Activated CD4-positive, alpha-beta memory T cell treated with anti-CD3 and anti-CD28 coated beads, Interleukin-2, amount 10 ng/mL, durations not matched to agents 7 days and 5 days (primary cell): ENCODE measurements at regions of chr16 and their contacts with region 1.

Region 1: DNA sequence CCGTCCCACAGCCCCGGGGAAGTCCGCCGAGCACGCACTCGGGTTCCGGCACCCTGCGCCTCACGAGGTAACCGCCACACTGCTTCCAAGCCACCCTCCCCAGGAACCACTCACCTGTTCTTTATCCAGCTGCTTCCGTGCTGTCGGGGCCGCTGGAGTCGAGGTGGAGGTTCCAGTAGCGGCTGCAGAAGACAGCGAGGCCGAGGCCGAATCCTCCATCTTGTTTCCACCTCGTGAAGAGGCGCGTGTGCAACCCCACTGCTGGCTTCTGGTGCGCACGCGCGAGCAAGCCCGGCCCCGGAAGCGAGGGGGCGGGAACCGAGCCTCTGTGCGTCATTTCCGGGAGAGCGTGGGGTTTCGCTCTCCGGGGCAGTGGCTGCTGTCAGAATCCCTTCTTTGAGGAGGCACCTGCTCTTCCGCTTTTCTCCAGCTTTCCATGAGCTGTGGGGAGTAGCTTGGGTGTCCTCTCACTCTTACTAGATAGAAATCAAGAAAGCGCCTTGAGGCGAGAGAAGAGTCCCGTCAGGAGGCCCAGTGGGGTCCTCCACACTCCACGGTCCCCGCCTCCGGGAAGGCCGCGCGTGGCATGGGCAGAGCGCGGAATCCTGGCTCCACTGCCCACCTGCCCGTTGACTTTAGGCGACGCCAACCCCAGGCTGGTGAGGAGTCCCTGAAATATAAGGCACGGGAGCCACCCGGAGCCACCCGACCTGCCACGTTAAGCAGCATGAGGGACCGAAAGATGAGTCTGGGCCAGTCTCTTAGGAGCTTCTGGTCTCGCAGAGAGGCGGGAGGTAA is at the start of gene RSL1D1:
- DNase-seq: peak; percentile 94
- H3K4me3 Mint-ChIP-seq: peak within 1 kb of the TSS; percentile 97
- H3K27ac Mint-ChIP-seq: peak within 1 kb of the TSS; percentile 90
- H3K4me1 Mint-ChIP-seq: peaks cover 61% of the 10 kb centered on the region
- H3K27me3 Mint-ChIP-seq: no peaks in the 10 kb centered on the region
- total RNA-seq, gene RSL1D1: 146 to 157 TPM

Region 2: DNA sequence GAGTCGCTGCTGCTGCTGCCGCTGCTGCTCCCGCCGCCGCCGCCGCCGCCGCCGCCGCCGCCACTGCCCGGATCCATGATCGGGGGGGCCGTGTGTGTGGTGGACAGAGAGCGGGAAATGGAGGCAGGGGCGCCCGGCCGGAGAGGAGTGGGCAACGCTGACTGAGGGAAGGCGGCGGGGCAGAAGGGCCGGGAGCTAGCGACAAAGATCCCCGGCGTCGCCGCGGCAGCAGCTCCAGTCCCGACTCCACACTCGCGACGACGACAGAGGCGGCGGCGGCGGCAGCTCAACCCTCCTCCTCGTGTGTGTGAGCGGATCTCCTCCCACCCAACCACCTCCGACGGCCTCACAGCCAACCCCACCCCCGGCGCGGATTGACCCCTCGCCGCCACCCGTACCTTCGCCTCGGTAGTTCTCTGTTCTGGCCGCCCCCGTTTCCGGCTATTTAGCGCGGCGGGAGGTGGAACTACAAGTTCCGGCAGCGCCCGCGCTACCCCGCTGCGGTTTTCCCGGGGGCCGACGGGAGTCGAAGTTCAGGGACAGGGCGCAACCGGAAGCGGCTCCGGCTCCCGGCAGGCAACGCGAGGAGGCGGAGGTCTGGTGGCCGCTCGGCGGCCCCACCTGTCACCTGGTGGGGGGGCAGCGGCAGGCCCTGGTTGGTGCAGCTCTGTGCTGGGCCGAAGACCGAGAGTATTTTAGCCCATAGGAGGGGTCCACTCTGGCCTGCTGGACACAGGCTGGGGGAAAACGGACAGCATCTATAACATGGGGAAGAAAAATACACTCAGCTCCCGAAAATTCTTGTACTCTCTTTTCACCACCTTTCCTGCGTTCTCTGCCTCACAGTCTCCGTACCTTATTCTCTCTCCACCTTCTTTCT is 64.4 kb after region 1 on chr16 and contains the start of gene GSPT1:
- CTCF ChIA-PET with region 1: no interaction called
- POLR2A ChIA-PET with region 1: interaction called, 23 read pairs
- DNase-seq: peak; percentile 100
- H3K4me3 Mint-ChIP-seq: peak within 1 kb of the TSS; percentile 88
- H3K27ac Mint-ChIP-seq: peak within 1 kb of the TSS; percentile 93
- H3K4me1 Mint-ChIP-seq: peaks cover 34% of the 10 kb centered on the region
- H3K27me3 Mint-ChIP-seq: peaks cover 13% of the 10 kb centered on the region
- total RNA-seq, gene GSPT1: 124 to 125 TPM

Region 3: DNA sequence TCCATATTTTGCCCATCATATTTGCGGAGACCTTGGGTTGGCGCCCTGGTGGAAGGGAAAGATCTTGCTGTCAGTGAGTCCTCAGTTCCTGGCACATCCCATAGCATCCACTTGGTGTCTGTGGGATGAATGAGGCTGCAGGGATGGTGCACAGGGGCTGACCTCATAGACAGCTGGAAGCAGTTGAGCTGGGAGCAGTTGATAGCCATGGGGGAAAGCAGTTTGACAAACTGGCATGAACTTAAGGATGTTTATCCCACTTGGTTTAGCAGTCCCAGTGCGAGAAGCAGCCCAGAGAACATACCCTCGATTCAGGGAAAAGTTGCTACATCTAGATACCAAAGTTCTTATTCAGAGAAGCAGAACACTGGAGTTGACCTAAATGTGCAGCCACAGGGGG is 205.8 kb after region 1 on chr16:
- CTCF ChIA-PET with region 1: no interaction called
- POLR2A ChIA-PET with region 1: no interaction called
- DNase-seq: no peak
- H3K4me3 Mint-ChIP-seq: no peak overlapping the region
- H3K27ac Mint-ChIP-seq: no peak overlapping the region
- H3K4me1 Mint-ChIP-seq: peaks cover 4% of the 10 kb centered on the region
- H3K27me3 Mint-ChIP-seq: no peaks in the 10 kb centered on the region